Posterior vena cava (tissue), 2 donors: ENCODE measurements at regions of chr15 and their contacts with region 1.

Region 1: DNA sequence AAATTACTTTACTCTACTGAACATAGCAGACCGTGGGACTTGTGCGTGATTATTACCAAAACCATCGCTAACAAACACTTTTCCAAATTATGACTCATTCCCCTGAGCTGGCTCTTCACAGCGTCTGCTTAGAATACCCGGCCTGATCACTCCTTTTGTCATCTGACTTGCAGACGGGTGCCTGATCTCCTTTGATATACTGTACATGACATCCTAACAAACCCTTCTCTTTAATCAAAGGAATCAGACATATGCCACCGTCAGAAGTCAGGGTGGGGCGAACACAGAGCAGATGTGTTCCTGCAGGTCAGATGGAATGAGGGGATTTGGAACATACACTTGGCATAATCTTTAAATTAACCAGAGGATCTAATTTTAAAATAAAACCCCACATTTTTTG is 48.5 kb upstream of the SH3GL3 start:
- DNase-seq: no peak

Region 2: DNA sequence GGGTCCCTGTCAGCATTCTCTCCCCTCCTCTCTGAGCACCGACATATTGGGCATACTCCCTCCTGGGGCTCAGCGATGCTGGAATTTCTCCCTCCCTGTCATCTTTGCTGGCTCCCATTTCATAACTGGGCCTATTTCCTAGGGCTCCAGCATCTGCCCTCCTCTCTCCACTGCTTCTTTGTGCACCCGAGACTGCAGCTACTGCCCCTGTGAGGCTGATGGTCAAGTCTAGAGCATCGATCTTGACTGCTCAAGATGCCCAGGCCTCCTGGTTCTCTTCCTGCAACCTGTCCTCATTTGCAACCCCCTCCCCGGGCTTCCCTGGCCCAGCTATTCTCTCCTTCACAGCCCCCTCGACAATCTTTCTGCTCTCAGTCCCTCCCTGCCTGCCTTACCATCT is 535.7 kb before region 1 on chr15:
- intact Hi-C with region 1: no loop called
- DNase-seq: peak; percentile 43

Region 3: DNA sequence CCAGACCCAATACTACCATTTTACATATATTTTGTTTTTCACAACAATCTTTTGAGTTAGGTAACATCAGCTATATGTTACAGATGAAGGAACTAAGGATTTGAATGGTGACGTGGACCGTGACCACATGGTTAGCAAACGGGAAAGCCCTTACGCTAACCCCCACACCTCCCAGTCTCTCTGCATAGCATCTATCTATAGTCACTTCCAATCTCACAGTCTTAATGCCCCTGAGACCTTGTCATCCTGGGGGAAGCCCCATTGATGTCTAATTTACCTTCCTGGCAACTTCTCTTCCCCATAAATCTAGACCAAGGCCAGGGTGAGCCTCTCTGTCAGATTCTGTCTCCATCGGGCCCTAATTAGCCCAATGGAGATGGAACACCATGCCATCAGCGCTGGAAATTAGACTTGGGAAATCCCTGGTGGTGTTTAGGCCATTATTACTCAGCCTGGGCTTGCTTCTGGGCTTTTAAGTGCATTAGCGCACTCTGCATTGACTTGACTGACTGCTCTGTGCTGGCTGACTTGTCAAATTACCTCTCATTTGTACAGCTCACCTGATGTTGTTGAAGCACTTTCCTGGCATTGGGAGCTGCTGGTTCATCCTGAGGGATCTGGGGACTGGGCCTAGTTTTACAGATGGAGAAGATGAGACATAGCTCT is 14.6 kb after region 1 on chr15:
- intact Hi-C with region 1: loop called in 1 of 2 experiments (anchors 1 kb)
- DNase-seq: no peak

Region 4: GRCh38 chr15:83436458-83437158 is 38.0 kb after region 1 on chr15:
- intact Hi-C with region 1: no loop called
- DNase-seq: no peak